CD4-positive, alpha-beta T cell (primary cell): ENCODE measurements at regions of chr3 and their contacts with region 1.

Region 1: GRCh38 chr3:49339945-49340800 is at the start of gene USP4:
- DNase-seq: peak; percentile 82 to 97 (median 92)
- ATAC-seq: peak; percentile 84
- H3K4me3 ChIP-seq: peak within 1 kb of the TSS; percentile 90
- H3K4me3 Mint-ChIP-seq: peak within 1 kb of the TSS; percentile 86
- H3K27ac ChIP-seq: peak within 1 kb of the TSS; percentile 95 to 98
- H3K27ac Mint-ChIP-seq: peak within 1 kb of the TSS; percentile 91
- H3K4me1 ChIP-seq: peaks cover 69% of the 10 kb centered on the region
- H3K4me1 Mint-ChIP-seq: peaks cover 53% of the 10 kb centered on the region
- H3K27me3 ChIP-seq: no peaks in the 10 kb centered on the region
- H3K27me3 Mint-ChIP-seq: no peaks in the 10 kb centered on the region
- CTCF ChIP-seq: peak; percentile 52
- total RNA-seq, gene USP4: 94.3 to 95.2 TPM

Region 2: DNA sequence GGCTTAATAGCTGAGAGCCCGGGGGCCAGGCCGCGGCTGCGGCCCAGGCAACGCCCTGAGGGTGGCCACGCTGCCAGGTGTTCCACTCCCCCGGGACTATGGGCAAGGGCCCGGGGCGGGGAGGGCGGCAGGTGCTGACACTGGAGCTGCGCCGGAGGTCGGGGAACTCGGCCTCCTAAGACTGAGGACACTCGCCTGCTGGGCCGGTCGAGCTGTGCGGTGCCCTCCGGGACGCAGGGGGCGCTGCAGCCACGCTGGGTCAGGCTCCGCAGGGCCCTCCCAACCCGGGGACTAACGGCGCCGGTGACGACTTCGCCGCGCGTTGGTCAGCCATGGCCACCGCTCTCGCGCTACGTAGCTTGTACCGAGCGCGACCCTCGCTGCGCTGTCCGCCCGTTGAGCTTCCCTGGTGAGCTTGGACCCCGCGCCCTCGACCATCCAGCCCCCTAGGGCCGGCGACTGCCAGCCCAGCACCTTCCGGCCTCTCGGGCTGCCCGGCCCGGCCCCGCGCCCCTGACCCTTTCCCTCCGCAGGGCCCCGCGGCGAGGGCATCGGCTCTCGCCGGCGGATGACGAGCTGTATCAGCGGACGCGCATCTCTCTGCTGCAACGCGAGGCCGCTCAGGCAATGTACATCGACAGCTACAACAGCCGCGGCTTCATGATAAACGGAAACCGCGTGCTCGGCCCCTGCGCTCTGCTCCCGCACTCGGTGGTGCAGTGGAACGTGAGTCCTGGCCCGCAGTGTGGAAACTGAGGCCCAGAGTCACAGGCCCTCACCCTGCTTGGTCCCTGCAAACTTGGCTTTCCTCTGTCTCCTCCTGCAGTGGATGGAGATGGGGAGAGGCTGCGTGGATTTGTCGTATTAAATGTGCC is 318.1 kb before region 1 on chr3 and contains the start of gene NDUFAF3:
- CTCF ChIA-PET with region 1: no interaction called
- POLR2A ChIA-PET with region 1: interaction called, 22 read pairs
- intact Hi-C with region 1: no loop called
- DNase-seq: peak; percentile 81 to 95 (median 90)
- ATAC-seq: peak; percentile 74
- H3K4me3 ChIP-seq: peak within 1 kb of the TSS; percentile 80
- H3K4me3 Mint-ChIP-seq: peak within 1 kb of the TSS; percentile 95
- H3K27ac ChIP-seq: peak within 1 kb of the TSS; percentile 92 to 98
- H3K27ac Mint-ChIP-seq: peak within 1 kb of the TSS; percentile 90
- H3K4me1 ChIP-seq: peaks cover 63% of the 10 kb centered on the region
- H3K4me1 Mint-ChIP-seq: peaks cover 50% of the 10 kb centered on the region
- H3K27me3 ChIP-seq: no peaks in the 10 kb centered on the region
- H3K27me3 Mint-ChIP-seq: no peaks in the 10 kb centered on the region
- CTCF ChIP-seq: peak; percentile 99
- total RNA-seq, gene NDUFAF3: 52.7 to 53.2 TPM

Region 3: DNA sequence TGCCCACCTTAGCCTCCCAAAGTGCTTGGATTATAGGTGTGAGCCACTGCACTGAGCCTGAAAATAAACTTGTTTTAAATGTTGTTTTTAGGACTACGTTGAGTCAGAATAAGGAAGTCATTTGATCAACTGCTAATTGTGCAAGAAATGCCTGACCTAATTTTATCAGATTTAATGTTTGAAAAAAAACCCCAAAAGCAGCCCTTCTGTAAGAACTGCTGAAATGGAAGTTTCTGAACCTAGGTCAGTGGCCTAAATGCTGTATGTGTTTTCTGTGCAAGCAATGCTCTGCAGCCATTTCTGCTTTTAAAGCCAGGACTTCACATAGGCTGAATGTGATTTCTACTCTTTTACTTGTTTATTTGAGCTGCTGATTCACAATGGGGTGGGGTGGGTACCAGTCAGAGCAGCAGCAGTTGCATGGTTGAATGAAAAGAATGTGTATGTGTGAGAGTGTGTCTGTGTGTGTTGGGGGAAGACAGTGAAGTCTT is 11.4 kb after region 1 on chr3:
- CTCF ChIA-PET with region 1: interaction called, 32 read pairs
- POLR2A ChIA-PET with region 1: interaction called, 19 read pairs
- intact Hi-C with region 1: no loop called
- DNase-seq: peak in 2 of 14 experiments; percentile 11 to 29
- ATAC-seq: no peak
- H3K4me3 ChIP-seq: no peak overlapping the region
- H3K4me3 Mint-ChIP-seq: peak overlapping the region; percentile 7
- H3K27ac ChIP-seq: no peak overlapping the region
- H3K27ac Mint-ChIP-seq: peak overlapping the region; percentile 69
- H3K4me1 ChIP-seq: peaks cover 21% of the 10 kb centered on the region
- H3K4me1 Mint-ChIP-seq: peaks cover 15% of the 10 kb centered on the region
- H3K27me3 ChIP-seq: no peaks in the 10 kb centered on the region
- H3K27me3 Mint-ChIP-seq: no peaks in the 10 kb centered on the region
- CTCF ChIP-seq: no peak

Region 4: GRCh38 chr3:49411968-49412631 is 71.9 kb after region 1 on chr3 and contains the starts of genes RHOA and TCTA:
- CTCF ChIA-PET with region 1: interaction called, 14 read pairs
- POLR2A ChIA-PET with region 1: interaction called, 82 read pairs
- intact Hi-C with region 1: loop called (anchors 1 kb)
- DNase-seq: peak; percentile 97 to 100 (median 99)
- ATAC-seq: peak; percentile 84
- H3K4me3 ChIP-seq: peak within 1 kb of the TSS; percentile 75
- H3K4me3 Mint-ChIP-seq: peak within 1 kb of the TSS; percentile 96
- H3K27ac ChIP-seq: peak within 1 kb of the TSS; percentile 94 to 95
- H3K27ac Mint-ChIP-seq: peak within 1 kb of the TSS; percentile 97
- H3K4me1 ChIP-seq: peaks cover 75% of the 10 kb centered on the region
- H3K4me1 Mint-ChIP-seq: peaks cover 70% of the 10 kb centered on the region
- H3K27me3 ChIP-seq: no peaks in the 10 kb centered on the region
- H3K27me3 Mint-ChIP-seq: no peaks in the 10 kb centered on the region
- CTCF ChIP-seq: no peak
- total RNA-seq, gene RHOA: 256 to 271 TPM
- total RNA-seq, gene TCTA: 21.4 to 22.0 TPM

Region 5: DNA sequence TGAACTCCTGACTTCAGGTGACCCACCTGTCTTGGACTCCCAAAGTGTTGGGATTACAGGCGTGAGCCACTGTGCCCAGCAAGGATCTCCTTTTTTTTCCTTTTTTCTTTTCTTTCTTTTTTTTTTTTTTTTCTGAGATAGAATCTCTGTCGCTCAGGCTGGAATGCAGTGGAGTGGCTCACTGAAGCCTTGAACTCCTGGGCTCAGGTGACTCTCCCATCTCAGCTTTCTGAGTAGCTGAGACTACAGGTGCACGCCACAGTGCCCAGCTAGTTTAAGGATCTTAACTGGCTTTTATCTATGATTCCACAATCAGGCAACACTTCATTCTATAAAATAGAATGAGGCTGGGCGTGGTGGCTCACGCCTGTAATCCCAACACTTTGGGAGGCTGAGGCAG is 105.2 kb after region 1 on chr3:
- CTCF ChIA-PET with region 1: interaction called, 22 read pairs
- POLR2A ChIA-PET with region 1: interaction called, 35 read pairs
- intact Hi-C with region 1: loop called (anchors 1 kb)
- DNase-seq: no peak
- ATAC-seq: no peak
- H3K4me3 ChIP-seq: no peak overlapping the region
- H3K4me3 Mint-ChIP-seq: no peak overlapping the region
- H3K27ac ChIP-seq: no peak overlapping the region
- H3K27ac Mint-ChIP-seq: no peak overlapping the region
- H3K4me1 ChIP-seq: peaks cover 21% of the 10 kb centered on the region
- H3K4me1 Mint-ChIP-seq: peaks cover 14% of the 10 kb centered on the region
- H3K27me3 ChIP-seq: no peaks in the 10 kb centered on the region
- H3K27me3 Mint-ChIP-seq: no peaks in the 10 kb centered on the region
- CTCF ChIP-seq: no peak

Region 6: GRCh38 chr3:49469936-49470713 is 130.0 kb after region 1 on chr3 and contains the start of gene DAG1:
- CTCF ChIA-PET with region 1: interaction called, 13 read pairs
- POLR2A ChIA-PET with region 1: interaction called, 43 read pairs
- intact Hi-C with region 1: no loop called
- DNase-seq: peak; percentile 88 to 99 (median 94)
- ATAC-seq: peak; percentile 82
- H3K4me3 ChIP-seq: peak within 1 kb of the TSS; percentile 78
- H3K4me3 Mint-ChIP-seq: peak within 1 kb of the TSS; percentile 91
- H3K27ac ChIP-seq: peak within 1 kb of the TSS; percentile 86 to 88
- H3K27ac Mint-ChIP-seq: peak within 1 kb of the TSS; percentile 95
- H3K4me1 ChIP-seq: peaks cover 26% of the 10 kb centered on the region
- H3K4me1 Mint-ChIP-seq: peaks cover 23% of the 10 kb centered on the region
- H3K27me3 ChIP-seq: no peaks in the 10 kb centered on the region
- H3K27me3 Mint-ChIP-seq: no peaks in the 10 kb centered on the region
- CTCF ChIP-seq: no peak
- total RNA-seq, gene DAG1: 15.0 to 18.3 TPM